ENCODE measurements at regions of chr1 and their contacts with region 1.

Region 1: DNA sequence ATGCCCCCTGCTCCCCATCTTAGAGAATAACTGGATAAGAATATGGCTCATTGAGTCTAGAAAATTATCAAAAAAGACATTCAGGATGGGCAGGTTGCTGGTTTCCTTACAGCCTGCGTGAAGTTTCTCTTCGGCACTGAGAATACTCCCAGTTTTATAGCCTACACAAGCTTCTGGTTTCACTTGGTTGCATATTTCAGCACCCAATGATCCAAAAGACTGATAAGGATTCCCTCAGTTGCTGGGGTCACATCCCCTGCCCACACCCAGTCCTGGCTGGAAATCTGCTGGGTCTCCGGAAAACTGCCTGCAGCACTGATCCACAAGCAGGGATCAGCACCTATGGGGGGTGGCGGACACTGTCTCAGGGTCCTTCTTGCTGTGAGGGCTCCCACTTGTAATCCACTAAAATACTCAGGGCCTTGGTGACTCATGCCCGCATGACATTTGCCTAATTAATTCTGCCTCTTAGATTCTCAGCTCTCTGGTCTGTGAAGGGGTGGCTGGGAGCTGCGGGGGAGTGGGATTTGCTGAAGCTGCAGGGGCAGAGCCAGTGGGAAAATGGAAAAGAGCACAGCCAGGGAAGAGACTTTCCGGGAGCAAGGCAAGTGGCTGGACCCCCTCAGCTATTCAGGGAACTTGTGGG is 142.5 kb downstream of the ZNF648 start:
- DNase-seq: peak in 1 of 4 experiments; percentile 30
- ATAC-seq: peak; percentile 49
- H3K4me3 ChIP-seq: no peak overlapping the region
- H3K27ac ChIP-seq: no peak overlapping the region
- H3K4me1 ChIP-seq: peaks cover 5 to 11% of the 10 kb centered on the region in 2 experiments; a peak in 3 of 5 replicates
- H3K27me3 ChIP-seq: no peaks in the 10 kb centered on the region
- CTCF ChIP-seq: no peak
- EP300 ChIP-seq: no peak
- POLR2A ChIP-seq: no peak
- RAD21 ChIP-seq: no peak

Region 2: GRCh38 chr1:181718034-181718433 is 201.0 kb before region 1 on chr1:
- CTCF ChIA-PET with region 1: no interaction called
- POLR2A ChIA-PET with region 1: no interaction called
- in situ Hi-C with region 1: no loop called
- intact Hi-C with region 1: no loop called
- DNase-seq: peak in 2 of 4 experiments; percentile 20 to 24
- ATAC-seq: peak; percentile 46; the same call in 2 of the 3 replicates
- H3K4me3 ChIP-seq: no peak overlapping the region
- H3K27ac ChIP-seq: no peak overlapping the region
- H3K4me1 ChIP-seq: no peaks in the 10 kb centered on the region
- H3K27me3 ChIP-seq: peaks cover 0 to 4% of the 10 kb centered on the region in 2 experiments; a peak in 3 of 5 replicates
- CTCF ChIP-seq: no peak
- EP300 ChIP-seq: 0 out of 2 replicates have a peak, but pooled peaks have one; percentile 35
- POLR2A ChIP-seq: no peak
- RAD21 ChIP-seq: no peak

Region 3: DNA sequence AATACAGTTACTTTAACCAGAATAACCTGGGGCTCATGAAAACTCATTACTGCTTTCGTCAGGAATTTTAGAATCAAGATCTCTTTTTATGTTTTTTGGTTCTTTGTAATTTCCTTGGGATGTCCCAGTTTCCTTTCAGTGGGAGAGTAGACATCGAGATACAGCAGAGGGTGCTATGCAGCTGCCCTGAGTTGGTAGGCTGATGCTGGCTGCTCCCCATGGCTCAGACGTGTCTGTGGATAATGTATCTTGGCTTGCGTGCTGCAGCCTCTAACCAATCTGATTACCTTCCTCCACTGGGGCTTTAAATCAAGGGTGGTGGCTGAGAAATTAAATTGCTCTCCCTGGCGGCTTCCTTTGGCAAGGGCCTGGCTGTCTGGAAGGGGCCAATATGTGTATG is 181.9 kb before region 1 on chr1:
- CTCF ChIA-PET with region 1: no interaction called
- POLR2A ChIA-PET with region 1: interaction called, 6 read pairs
- in situ Hi-C with region 1: no loop called
- intact Hi-C with region 1: loop called (anchors 5 kb)
- DNase-seq: peak; percentile 19 to 28 (median 22)
- ATAC-seq: peak; percentile 65
- H3K4me3 ChIP-seq: no peak overlapping the region
- H3K27ac ChIP-seq: no peak overlapping the region
- H3K4me1 ChIP-seq: peaks cover 0 to 11% of the 10 kb centered on the region in 2 experiments; a peak in 1 of 5 replicates
- H3K27me3 ChIP-seq: peaks cover 0 to 30% of the 10 kb centered on the region in 2 experiments; a peak in 3 of 5 replicates
- CTCF ChIP-seq: peak; percentile 11 to 54 (median 26); a peak in 2 of 6 replicates
- EP300 ChIP-seq: no peak
- POLR2A ChIP-seq: no peak
- RAD21 ChIP-seq: peak; percentile 63 to 67

Region 4: DNA sequence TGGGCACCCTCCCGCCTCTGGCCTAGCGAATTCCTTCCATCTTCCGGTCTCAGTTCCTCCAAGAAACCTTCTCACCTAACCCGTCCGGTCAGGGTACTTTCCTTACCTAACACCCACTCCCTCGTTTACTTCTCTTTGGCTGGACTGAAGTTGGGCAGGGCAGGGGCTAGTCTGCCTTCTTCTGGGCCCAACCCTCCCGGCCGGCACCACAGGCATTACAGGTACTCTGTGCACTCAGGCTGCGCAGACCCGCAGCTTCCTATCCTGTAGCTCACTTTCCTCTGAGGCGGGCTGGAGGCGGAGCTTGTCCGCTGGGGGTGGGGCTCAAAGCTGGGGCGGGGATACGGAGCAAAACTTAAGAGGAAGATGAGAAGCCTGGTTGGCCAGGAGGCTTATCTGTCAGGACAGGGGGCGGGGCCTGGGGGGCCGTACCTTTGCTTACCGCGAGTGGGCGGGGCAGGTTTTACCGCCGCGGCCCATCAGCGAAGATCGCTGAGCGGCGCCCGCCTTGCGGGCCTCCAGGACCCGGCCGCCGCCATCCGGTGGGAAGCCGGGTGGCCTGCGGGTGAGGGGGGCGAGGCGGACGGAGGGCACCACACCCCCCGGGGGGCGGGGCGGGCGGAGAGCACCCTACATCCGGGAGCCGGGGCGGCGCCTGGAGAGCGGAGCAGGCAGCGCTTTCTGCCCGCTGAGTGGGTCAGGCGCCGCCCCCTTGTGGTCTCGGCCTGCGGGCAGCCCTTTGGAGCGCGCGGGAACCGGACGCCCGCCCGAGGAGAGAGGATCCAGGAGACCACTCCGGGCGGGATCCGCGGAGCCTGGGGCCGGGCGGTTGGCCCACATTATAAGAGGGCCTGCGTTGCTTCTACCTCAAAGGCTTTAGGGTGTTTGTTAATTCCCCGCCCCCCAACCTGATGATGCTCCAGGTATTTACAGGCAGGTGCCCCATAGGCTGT is 110.7 kb after region 1 on chr1:
- CTCF ChIA-PET with region 1: no interaction called
- POLR2A ChIA-PET with region 1: no interaction called
- in situ Hi-C with region 1: no loop called
- intact Hi-C with region 1: no loop called
- DNase-seq: peak; percentile 97 to 99 (median 98)
- ATAC-seq: peak; percentile 98
- H3K4me3 ChIP-seq: peak overlapping the region; percentile 71
- H3K27ac ChIP-seq: peak overlapping the region; percentile 66
- H3K4me1 ChIP-seq: peaks cover 4 to 6% of the 10 kb centered on the region in 2 experiments; a peak in 3 of 5 replicates
- H3K27me3 ChIP-seq: no peaks in the 10 kb centered on the region
- CTCF ChIP-seq: peak; percentile 46 to 75 (median 56)
- EP300 ChIP-seq: peak; percentile 21; the same call in 1 of the 2 replicates
- POLR2A ChIP-seq: peak; percentile 90
- RAD21 ChIP-seq: peak; percentile 38 to 48; a peak in 3 of 4 replicates